ENCODE measurements at regions of chr14 and their contacts with region 1.

Region 1: DNA sequence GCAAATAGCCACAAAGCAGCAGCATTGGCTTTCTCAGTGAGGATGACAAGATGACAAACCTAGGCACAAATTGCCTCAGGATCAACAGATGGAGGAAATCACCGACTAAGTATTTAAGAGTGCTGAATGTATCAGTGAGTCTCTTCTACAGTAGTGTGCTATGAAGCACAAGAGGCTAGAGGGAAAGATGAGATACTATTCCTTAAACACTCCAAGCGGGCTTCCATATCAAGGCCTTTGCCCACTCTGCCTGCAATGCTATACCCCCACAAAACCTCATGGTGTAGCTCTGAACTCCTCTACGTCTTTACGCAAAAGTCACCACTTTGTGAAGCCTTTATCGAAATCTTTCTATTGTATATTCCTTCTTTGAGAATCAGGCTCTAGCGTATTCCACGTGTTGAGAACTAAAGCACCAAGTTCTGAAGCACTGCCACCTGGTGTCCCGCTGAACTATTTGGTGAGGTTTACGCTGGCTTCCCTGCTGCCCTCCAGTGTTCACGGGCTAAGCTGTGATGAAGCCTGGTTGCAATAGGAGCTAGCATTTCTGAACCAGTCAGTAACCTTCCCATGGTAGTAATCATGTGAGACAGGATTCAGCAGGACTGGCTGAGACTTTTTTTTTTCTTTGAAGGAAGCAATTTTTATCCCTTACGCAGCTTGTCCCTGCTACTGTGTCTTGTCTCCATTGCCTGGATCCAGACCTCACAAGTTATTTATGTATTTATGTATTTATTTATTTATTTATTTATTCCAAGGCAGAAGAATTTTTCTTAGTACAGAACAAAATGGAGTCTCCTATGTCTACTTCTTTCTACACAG is 426.5 kb upstream of the OR4E1 start:
- DNase-seq: peak; percentile 14 to 77 (median 53)
- ATAC-seq: peak; percentile 54 to 69 (median 65)
- H3K4me3 ChIP-seq: no peak overlapping the region
- H3K4me3 Mint-ChIP-seq: no peak overlapping the region
- H3K27ac ChIP-seq: no peak overlapping the region
- H3K27ac Mint-ChIP-seq: no peak overlapping the region
- H3K4me1 ChIP-seq: peaks cover 14 to 36% of the 10 kb centered on the region in 2 experiments
- H3K4me1 Mint-ChIP-seq: peaks cover 37 to 46% (median 44%) of the 10 kb centered on the region in 3 donors
- H3K27me3 ChIP-seq: no peaks in the 10 kb centered on the region
- H3K27me3 Mint-ChIP-seq: no peaks in the 10 kb centered on the region

Region 2: GRCh38 chr14:21894003-21894897 is 205.9 kb before region 1 on chr14:
- CTCF ChIA-PET with region 1: no interaction called
- POLR2A ChIA-PET with region 1: no interaction called
- DNase-seq: peak in 33 of 35 experiments; percentile 12 to 67 (median 44)
- ATAC-seq: peak; percentile 80 to 90 (median 86)
- H3K4me3 ChIP-seq: peak overlapping the region; percentile 12 to 24
- H3K4me3 Mint-ChIP-seq: peak overlapping the region; percentile 74 to 79 (median 77)
- H3K27ac ChIP-seq: no peak overlapping the region
- H3K27ac Mint-ChIP-seq: peak overlapping the region; percentile 89 to 93
- H3K4me1 ChIP-seq: peaks cover 0 to 5% of the 10 kb centered on the region in 2 experiments
- H3K4me1 Mint-ChIP-seq: peaks cover 15 to 16% (median 15%) of the 10 kb centered on the region in 3 donors
- H3K27me3 ChIP-seq: peaks cover 0 to 3% of the 10 kb centered on the region in 2 experiments
- H3K27me3 Mint-ChIP-seq: peaks cover 0 to 2% of the 10 kb centered on the region in 2 donors

Region 3: DNA sequence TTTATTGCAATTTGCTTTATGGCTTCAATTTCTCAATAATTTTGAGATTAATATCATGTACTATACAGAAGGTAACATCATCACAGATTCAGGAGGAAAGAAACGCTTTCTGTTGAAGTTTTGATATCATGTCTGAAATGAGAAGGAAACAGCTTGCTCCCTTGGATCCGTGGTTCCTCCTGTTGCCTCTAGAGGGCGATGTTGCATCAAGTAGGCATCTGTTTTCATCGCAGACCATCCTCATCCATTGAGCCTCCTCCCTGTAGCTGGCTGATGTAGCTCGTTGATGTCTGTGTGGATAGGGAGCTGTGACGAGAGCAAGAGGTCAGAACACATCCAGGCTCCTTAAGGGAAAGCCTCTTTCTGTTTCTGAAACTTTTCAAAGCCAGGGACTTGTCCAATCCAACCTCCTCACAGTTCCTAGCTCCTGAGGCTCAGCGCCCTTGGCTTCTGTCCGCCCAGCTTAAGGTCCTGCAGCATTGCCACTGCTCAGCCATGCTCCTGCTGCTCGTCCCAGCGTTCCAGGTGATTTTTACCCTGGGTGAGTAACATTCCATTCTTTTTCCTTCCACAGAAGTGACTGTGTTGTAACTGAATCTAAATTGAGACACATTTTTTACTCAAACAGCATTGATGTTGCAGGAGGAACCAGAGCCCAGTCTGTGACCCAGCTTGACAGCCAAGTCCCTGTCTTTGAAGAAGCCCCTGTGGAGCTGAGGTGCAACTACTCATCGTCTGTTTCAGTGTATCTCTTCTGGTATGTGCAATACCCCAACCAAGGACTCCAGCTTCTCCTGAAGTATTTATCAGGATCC is 121.8 kb before region 1 on chr14:
- CTCF ChIA-PET with region 1: no interaction called
- POLR2A ChIA-PET with region 1: interaction called in 1 of 2 experiments, 12 read pairs
- DNase-seq: peak in 34 of 35 experiments; percentile 22 to 80 (median 50)
- ATAC-seq: peak; percentile 71 to 81 (median 76)
- H3K4me3 ChIP-seq: peak overlapping the region in 1 of 2 donors; percentile 31
- H3K4me3 Mint-ChIP-seq: peak overlapping the region; percentile 65 to 69 (median 68)
- H3K27ac ChIP-seq: peak overlapping the region; percentile 29
- H3K27ac Mint-ChIP-seq: peak overlapping the region; percentile 78 to 83
- H3K4me1 ChIP-seq: peaks cover 0 to 6% of the 10 kb centered on the region in 2 experiments
- H3K4me1 Mint-ChIP-seq: peaks cover 22 to 31% (median 28%) of the 10 kb centered on the region in 3 donors
- H3K27me3 ChIP-seq: no peaks in the 10 kb centered on the region
- H3K27me3 Mint-ChIP-seq: peaks cover 3 to 7% of the 10 kb centered on the region in 2 donors

Region 4: DNA sequence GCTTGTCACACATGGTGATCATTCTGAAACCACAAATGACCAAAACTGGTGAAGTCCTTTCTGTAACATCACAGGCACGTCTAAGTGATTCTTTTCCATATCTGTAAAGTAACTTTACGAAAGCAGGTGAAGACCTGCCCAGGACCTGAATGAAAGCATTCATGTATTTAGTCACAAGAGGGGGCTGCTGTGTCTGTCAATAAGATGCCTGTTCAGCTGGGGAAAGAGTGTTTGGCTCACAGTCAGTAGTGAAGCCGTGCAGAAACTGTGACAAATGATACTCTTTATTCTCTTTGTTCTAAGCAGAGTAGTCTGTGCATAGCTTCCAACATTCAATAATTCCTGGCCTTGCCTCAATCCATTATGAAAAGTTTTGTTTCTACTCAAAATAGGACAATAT is 53.0 kb before region 1 on chr14:
- CTCF ChIA-PET with region 1: interaction called in 1 of 2 experiments, 10 read pairs
- POLR2A ChIA-PET with region 1: no interaction called
- DNase-seq: peak in 23 of 35 experiments; percentile 7 to 72 (median 23)
- ATAC-seq: peak; percentile 88 to 95 (median 90)
- H3K4me3 ChIP-seq: no peak overlapping the region
- H3K4me3 Mint-ChIP-seq: peak overlapping the region; percentile 36 to 60 (median 55)
- H3K27ac ChIP-seq: peak overlapping the region; percentile 23
- H3K27ac Mint-ChIP-seq: peak overlapping the region; percentile 89 to 92
- H3K4me1 ChIP-seq: peaks cover 7 to 23% of the 10 kb centered on the region in 2 experiments
- H3K4me1 Mint-ChIP-seq: peaks cover 31 to 47% (median 35%) of the 10 kb centered on the region in 3 donors
- H3K27me3 ChIP-seq: no peaks in the 10 kb centered on the region
- H3K27me3 Mint-ChIP-seq: peaks cover 0 to 1% of the 10 kb centered on the region in 2 donors

Region 5: DNA sequence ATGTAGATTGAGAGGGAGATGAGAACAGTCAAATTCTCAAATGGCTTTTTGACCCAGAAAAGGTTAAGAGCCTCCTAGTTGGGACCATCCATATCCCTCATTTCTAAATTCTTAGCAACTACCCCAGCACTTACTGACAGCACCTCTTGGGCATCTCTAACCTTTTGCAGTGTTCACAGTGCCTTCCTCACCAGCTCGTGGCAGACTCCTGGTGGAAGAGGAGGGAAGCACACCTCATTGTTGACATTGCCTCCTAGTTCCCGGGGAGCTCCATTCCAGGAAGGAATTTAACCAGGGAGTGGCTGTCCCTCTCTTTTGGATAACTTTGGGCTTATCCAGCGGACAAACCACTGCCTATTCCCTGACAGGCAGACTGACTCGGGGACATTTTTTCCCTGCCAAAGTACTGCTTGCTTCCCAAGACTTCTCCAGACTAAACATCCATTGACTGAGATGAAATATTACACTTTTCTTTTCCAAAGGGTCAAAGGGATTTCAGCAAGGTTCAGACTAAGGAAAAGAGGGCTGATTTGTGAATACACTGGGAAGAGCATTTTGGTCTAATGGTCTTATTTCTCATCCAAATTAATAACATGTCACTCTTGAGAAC is 553.0 kb after region 1 on chr14:
- CTCF ChIA-PET with region 1: no interaction called
- POLR2A ChIA-PET with region 1: no interaction called
- DNase-seq: peak in 34 of 35 experiments; percentile 2 to 70 (median 26)
- ATAC-seq: peak; percentile 77 to 89 (median 84)
- H3K4me3 ChIP-seq: no peak overlapping the region
- H3K4me3 Mint-ChIP-seq: no peak overlapping the region
- H3K27ac ChIP-seq: no peak overlapping the region
- H3K27ac Mint-ChIP-seq: no peak overlapping the region
- H3K4me1 ChIP-seq: no peaks in the 10 kb centered on the region
- H3K4me1 Mint-ChIP-seq: no peaks in the 10 kb centered on the region
- H3K27me3 ChIP-seq: no peaks in the 10 kb centered on the region
- H3K27me3 Mint-ChIP-seq: no peaks in the 10 kb centered on the region

Measured in T-cell (primary cell).